CD4-positive, alpha-beta T cell (primary cell): ENCODE measurements at regions of chr5 and their contacts with region 1.

Region 1: GRCh38 chr5:60699530-60700382 is at the start of gene DEPDC1B:
- DNase-seq: peak; percentile 57 to 91 (median 76)
- ATAC-seq: peak; percentile 89
- H3K4me3 ChIP-seq: peak within 1 kb of the TSS; percentile 95
- H3K4me3 Mint-ChIP-seq: peak within 1 kb of the TSS; percentile 96
- H3K27ac ChIP-seq: peak within 1 kb of the TSS in 1 of 2 donors; percentile 36
- H3K27ac Mint-ChIP-seq: peak within 1 kb of the TSS; percentile 45
- H3K4me1 ChIP-seq: peaks cover 24% of the 10 kb centered on the region
- H3K4me1 Mint-ChIP-seq: peaks cover 22% of the 10 kb centered on the region
- H3K27me3 ChIP-seq: no peaks in the 10 kb centered on the region
- H3K27me3 Mint-ChIP-seq: no peaks in the 10 kb centered on the region
- CTCF ChIP-seq: no peak
- total RNA-seq, gene DEPDC1B: 0.39 to 0.60 TPM

Region 2: DNA sequence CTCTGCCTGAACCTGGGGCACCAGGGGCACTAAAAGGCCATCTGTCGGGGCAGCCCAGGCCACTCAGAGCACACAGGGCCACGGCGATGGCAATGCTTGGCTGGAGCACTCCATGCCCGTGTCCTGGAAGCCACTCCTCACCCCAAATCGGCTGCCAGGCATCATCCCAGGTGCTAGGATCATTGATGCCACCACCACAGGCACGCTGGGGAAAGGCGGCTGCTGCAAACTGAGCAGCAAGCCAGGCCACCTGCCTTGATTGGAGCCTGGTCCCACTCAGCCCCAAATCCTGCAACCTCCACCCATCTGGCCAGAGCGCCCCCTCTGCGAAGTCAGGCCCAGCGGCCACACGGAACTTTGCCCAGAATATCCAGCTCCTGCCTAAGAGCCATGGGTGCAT is 67.6 kb before region 1 on chr5:
- CTCF ChIA-PET with region 1: no interaction called
- POLR2A ChIA-PET with region 1: no interaction called
- intact Hi-C with region 1: no loop called
- DNase-seq: no peak
- ATAC-seq: no peak
- H3K4me3 ChIP-seq: no peak overlapping the region
- H3K4me3 Mint-ChIP-seq: no peak overlapping the region
- H3K27ac ChIP-seq: no peak overlapping the region
- H3K27ac Mint-ChIP-seq: no peak overlapping the region
- H3K4me1 ChIP-seq: no peaks in the 10 kb centered on the region
- H3K4me1 Mint-ChIP-seq: no peaks in the 10 kb centered on the region
- H3K27me3 ChIP-seq: no peaks in the 10 kb centered on the region
- H3K27me3 Mint-ChIP-seq: no peaks in the 10 kb centered on the region
- CTCF ChIP-seq: no peak

Region 3: GRCh38 chr5:61162010-61162831 is 462.5 kb after region 1 on chr5 and contains the start of gene SMIM15:
- CTCF ChIA-PET with region 1: no interaction called
- POLR2A ChIA-PET with region 1: no interaction called
- intact Hi-C with region 1: loop called in 1 of 2 experiments (anchors 10 kb)
- DNase-seq: peak; percentile 60 to 89 (median 75)
- ATAC-seq: peak; percentile 85
- H3K4me3 ChIP-seq: peak within 1 kb of the TSS; percentile 73
- H3K4me3 Mint-ChIP-seq: peak within 1 kb of the TSS; percentile 94
- H3K27ac ChIP-seq: peak within 1 kb of the TSS; percentile 69 to 77
- H3K27ac Mint-ChIP-seq: peak within 1 kb of the TSS; percentile 84
- H3K4me1 ChIP-seq: peaks cover 7% of the 10 kb centered on the region
- H3K4me1 Mint-ChIP-seq: peaks cover 50% of the 10 kb centered on the region
- H3K27me3 ChIP-seq: no peaks in the 10 kb centered on the region
- H3K27me3 Mint-ChIP-seq: no peaks in the 10 kb centered on the region
- CTCF ChIP-seq: no peak
- total RNA-seq, gene SMIM15: 16.5 to 18.2 TPM

Region 4: GRCh38 chr5:61200582-61201155 is 500.9 kb after region 1 on chr5:
- CTCF ChIA-PET with region 1: no interaction called
- POLR2A ChIA-PET with region 1: no interaction called
- intact Hi-C with region 1: no loop called
- DNase-seq: no peak
- ATAC-seq: no peak
- H3K4me3 ChIP-seq: no peak overlapping the region
- H3K4me3 Mint-ChIP-seq: no peak overlapping the region
- H3K27ac ChIP-seq: no peak overlapping the region
- H3K27ac Mint-ChIP-seq: no peak overlapping the region
- H3K4me1 ChIP-seq: no peaks in the 10 kb centered on the region
- H3K4me1 Mint-ChIP-seq: no peaks in the 10 kb centered on the region
- H3K27me3 ChIP-seq: peaks cover 0 to 9% of the 10 kb centered on the region in 2 experiments
- H3K27me3 Mint-ChIP-seq: peaks cover 33% of the 10 kb centered on the region
- CTCF ChIP-seq: no peak

Region 5: GRCh38 chr5:61408476-61409168 is 708.9 kb after region 1 on chr5:
- CTCF ChIA-PET with region 1: no interaction called
- POLR2A ChIA-PET with region 1: no interaction called
- intact Hi-C with region 1: loop called in 1 of 2 experiments (anchors 10 kb)
- DNase-seq: peak; percentile 90 to 100 (median 98)
- ATAC-seq: peak; percentile 95
- H3K4me3 ChIP-seq: peak overlapping the region; percentile 42
- H3K4me3 Mint-ChIP-seq: peak overlapping the region; percentile 86
- H3K27ac ChIP-seq: peak overlapping the region in 1 of 2 donors; percentile 37
- H3K27ac Mint-ChIP-seq: peak overlapping the region; percentile 71
- H3K4me1 ChIP-seq: no peaks in the 10 kb centered on the region
- H3K4me1 Mint-ChIP-seq: peaks cover 25% of the 10 kb centered on the region
- H3K27me3 ChIP-seq: no peaks in the 10 kb centered on the region
- H3K27me3 Mint-ChIP-seq: no peaks in the 10 kb centered on the region
- CTCF ChIP-seq: no peak